Activated CD4-positive, alpha-beta T cell treated with anti-CD3 and anti-CD28 coated beads for 36 hours (primary cell): ENCODE measurements at regions of chr4 and their contacts with region 1.

Region 1: GRCh38 chr4:58849026-58849425 is 1738.8 kb upstream of the IGFBP7 start:
- DNase-seq: no peak
- ATAC-seq: no peak
- H3K4me3 Mint-ChIP-seq: no peak overlapping the region
- H3K27ac Mint-ChIP-seq: no peak overlapping the region
- H3K4me1 Mint-ChIP-seq: no peaks in the 10 kb centered on the region
- H3K27me3 Mint-ChIP-seq: no peaks in the 10 kb centered on the region

Region 2: DNA sequence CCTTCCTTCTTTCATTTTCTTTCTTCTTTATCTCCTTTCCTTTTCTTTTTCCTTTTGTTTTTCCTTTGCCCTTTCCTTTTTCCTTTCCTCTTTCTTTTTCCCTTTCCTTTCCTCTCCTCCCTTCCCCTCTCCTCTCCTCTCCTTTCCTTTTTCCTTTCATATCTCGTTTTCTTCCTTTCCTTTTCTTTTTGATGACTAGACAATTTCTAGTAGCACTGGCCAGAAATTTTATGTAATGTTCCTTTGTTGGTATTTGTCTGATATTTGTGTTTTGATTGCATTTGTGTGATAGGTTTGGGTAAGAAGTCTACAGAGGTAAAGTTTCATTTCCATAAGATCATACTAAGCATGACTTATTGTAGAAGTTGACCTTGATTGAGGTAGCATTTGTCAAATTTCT is 15.9 kb before region 1 on chr4:
- CTCF ChIA-PET with region 1: no interaction called
- POLR2A ChIA-PET with region 1: no interaction called
- intact Hi-C with region 1: loop called in 1 of 2 experiments (anchors 1 kb)
- DNase-seq: no peak
- ATAC-seq: no peak
- H3K4me3 Mint-ChIP-seq: no peak overlapping the region
- H3K27ac Mint-ChIP-seq: no peak overlapping the region
- H3K4me1 Mint-ChIP-seq: no peaks in the 10 kb centered on the region
- H3K27me3 Mint-ChIP-seq: no peaks in the 10 kb centered on the region